ENCODE measurements at regions of chr5 and their contacts with region 1.

Region 1: GRCh38 chr5:176658007-176658599 is 10.8 kb downstream of the TSPAN17 start:
- DNase-seq: peak; percentile 45 to 69 (median 67)
- ATAC-seq: peak; percentile 60
- H3K4me3 ChIP-seq: no peak overlapping the region
- H3K27ac ChIP-seq: no peak overlapping the region
- H3K4me1 ChIP-seq: peaks cover 5% of the 10 kb centered on the region
- H3K27me3 ChIP-seq: no peaks in the 10 kb centered on the region
- CTCF ChIP-seq: peak; percentile 24 to 61 (median 55)
- POLR2A ChIP-seq: no peak

Region 2: DNA sequence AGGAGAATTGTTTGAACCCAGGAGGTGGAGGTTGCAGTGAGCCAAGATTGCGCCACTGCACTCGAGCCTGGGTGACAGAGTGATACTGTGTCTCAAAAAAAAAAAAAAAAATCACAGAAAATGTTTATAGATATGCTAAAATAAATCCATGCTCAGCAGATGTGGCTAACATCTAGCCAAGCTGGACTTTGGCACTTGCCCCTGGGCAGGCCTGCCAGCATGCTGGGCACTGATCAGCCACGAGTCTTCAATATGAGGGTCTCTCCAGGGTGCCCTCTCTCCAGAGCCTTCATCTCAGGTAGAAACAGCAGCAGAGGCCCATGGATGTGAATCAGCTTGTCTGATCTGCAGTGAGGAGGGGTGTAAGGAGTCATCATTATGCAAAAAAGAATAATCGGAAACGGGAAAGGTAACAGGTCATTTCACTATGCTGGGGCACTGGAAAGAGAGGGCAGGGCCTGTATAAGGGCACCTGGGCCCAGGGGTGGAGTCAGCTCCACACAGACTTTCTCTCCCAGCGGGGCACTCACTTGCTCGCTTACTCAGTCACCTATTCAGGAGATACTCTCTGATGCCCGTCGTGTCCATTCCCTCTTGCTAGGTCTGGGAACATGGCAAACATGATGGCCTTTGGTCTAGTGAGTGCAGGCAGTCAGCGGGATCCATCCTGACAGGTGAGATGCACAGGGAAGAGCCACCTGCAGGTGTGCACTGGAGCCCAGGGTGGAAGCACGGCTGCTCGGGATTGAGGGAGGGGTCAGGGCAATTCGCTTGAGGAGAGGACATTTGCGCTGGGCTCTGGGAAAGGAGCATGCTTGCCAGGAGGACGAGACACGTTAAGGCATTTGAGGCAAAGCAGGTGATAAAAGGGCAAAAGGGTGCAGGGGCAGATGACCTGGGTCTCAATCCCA is 138.0 kb before region 1 on chr5:
- intact Hi-C with region 1: no loop called
- DNase-seq: no peak
- ATAC-seq: no peak
- H3K4me3 ChIP-seq: no peak overlapping the region
- H3K27ac ChIP-seq: no peak overlapping the region
- H3K4me1 ChIP-seq: no peaks in the 10 kb centered on the region
- H3K27me3 ChIP-seq: no peaks in the 10 kb centered on the region
- CTCF ChIP-seq: no peak
- POLR2A ChIP-seq: no peak

Region 3: DNA sequence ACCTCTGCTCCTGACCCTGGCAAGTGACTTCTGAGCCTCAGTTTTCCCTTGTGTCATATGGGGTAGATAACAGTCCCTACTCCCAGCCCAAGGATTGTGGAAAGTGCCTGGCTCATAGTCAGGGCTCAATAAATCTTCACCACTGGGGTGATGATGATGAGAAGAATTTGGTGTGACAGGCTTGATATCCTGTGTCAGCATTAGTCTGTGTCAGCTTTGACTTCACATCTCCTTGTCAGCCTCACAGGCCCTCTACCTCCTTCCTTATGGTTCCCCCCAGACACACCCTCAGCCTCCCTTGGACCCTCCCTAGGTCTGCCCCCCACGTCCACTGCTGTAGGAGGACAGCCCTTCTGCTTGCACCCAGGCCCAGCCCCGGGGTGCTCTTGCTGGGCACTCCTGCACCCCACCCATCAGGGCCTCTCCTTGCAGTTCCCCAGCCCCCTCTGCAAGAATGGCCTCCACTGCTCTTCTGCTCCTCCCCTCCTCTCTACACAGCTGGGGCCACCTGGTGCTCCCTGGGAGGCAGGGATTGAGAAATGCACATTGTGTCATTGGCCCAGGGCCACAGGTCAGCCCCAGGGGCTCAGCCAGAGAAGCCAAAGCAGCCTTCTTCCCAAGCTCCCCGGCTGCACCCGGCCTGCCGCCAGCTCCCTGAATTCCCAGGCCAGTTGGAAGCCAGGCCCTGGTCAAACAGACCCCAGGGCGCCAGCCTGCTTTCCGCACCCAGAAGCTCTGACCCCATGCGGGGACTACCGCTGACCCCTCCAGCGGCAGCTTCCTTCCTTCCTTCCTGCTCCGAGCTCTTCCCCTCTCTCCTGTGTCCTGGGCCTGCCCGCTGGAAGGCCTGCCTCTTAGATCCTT is 436.4 kb after region 1 on chr5:
- intact Hi-C with region 1: loop called (anchors 10 kb)
- DNase-seq: peak; percentile 65 to 81 (median 76)
- ATAC-seq: peak; percentile 84
- H3K4me3 ChIP-seq: no peak overlapping the region
- H3K27ac ChIP-seq: peak overlapping the region; percentile 65 to 78 (median 69)
- H3K4me1 ChIP-seq: peaks cover 73% of the 10 kb centered on the region
- H3K27me3 ChIP-seq: no peaks in the 10 kb centered on the region
- CTCF ChIP-seq: no peak
- POLR2A ChIP-seq: no peak

Measured in body of pancreas (tissue), 4 donors.